ENCODE measurements at regions of chr12 and their contacts with region 1.

Region 1: GRCh38 chr12:122951979-122952892 is 14.0 kb downstream of the ABCB9 start:
- DNase-seq: peak; percentile 86 to 88
- ATAC-seq: peak; percentile 91
- H3K4me3 ChIP-seq: no peak overlapping the region
- H3K27ac ChIP-seq: no peak overlapping the region
- H3K4me1 ChIP-seq: no peaks in the 10 kb centered on the region
- H3K27me3 ChIP-seq: no peaks in the 10 kb centered on the region

Region 2: GRCh38 chr12:122860346-122861090 is 91.7 kb before region 1 on chr12:
- intact Hi-C with region 1: loop called (anchors 1 to 2 kb)
- DNase-seq: peak; percentile 91 to 96
- ATAC-seq: peak; percentile 86
- H3K4me3 ChIP-seq: no peak overlapping the region
- H3K27ac ChIP-seq: no peak overlapping the region
- H3K4me1 ChIP-seq: no peaks in the 10 kb centered on the region
- H3K27me3 ChIP-seq: no peaks in the 10 kb centered on the region